Breast epithelium (tissue), 4 donors: ENCODE measurements at regions of chr11 and their contacts with region 1.

Region 1: DNA sequence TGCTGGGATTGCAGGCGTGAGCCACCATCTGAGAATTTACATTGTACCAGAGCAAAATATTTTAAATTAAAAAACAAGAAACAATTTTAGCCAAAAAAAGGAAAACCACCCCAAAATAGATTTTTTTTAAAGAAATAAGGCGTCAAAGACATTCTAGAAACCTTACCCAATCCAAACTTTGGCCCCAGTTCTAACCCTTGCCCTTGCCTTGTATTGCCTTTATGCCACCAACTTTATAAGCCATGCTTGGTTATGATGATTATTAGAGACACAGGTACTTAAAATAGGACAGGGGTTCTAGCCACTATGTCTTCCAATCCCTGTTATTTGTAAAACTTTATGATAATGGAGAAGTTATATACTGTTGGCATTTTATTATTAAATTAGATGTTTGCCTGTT is 11.8 kb downstream of the C11orf54 start:
- DNase-seq: no peak
- H3K4me3 ChIP-seq: no peak overlapping the region
- H3K27ac ChIP-seq: no peak overlapping the region
- H3K4me1 ChIP-seq: no peaks in the 10 kb centered on the region
- H3K27me3 ChIP-seq: no peaks in the 10 kb centered on the region
- CTCF ChIP-seq: no peak
- POLR2A ChIP-seq: no peak

Region 2: GRCh38 chr11:93727985-93728791 is 25.1 kb before region 1 on chr11:
- intact Hi-C with region 1: no loop called
- DNase-seq: no peak
- H3K4me3 ChIP-seq: no peak overlapping the region
- H3K27ac ChIP-seq: peak overlapping the region in 1 of 2 donors; percentile 15
- H3K4me1 ChIP-seq: no peaks in the 10 kb centered on the region
- H3K27me3 ChIP-seq: no peaks in the 10 kb centered on the region
- CTCF ChIP-seq: no peak
- POLR2A ChIP-seq: no peak

Region 3: DNA sequence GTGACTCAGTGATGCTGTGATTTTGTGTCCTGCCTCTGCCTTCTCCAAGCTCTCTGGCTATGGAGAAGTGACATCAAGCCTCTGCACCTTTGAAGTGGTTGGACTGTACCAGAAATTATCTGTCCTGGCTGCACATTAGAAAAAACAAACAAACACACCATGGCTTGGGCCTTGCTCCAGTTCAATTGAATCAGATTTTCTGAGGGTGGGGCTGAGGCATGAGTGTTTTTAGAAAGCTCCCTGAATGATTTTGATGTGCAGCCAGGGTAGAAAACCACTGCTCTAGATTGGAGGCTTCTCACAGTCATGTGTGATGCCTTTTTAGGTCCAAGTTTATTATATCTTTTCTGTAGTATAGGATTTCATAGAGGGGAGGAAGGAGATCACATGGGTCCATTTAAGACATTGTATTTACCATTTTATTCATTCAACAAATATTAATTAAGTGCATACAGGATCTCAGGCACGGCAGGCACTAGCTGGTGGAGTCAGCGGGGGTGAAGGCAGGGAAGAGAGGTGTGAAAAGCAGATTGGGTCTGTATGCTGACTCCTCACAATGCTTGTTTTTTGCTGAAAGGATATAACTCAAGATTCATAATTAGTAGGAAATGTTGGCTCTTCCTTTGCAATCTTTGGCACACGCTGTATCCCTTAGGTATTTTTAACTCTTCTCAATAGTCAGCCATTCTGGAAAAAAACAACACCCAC is 104.3 kb after region 1 on chr11:
- intact Hi-C with region 1: loop called (anchors 5 kb)
- DNase-seq: no peak
- H3K4me3 ChIP-seq: no peak overlapping the region
- H3K27ac ChIP-seq: no peak overlapping the region
- H3K4me1 ChIP-seq: peaks cover 0 to 3% of the 10 kb centered on the region in 2 donors
- H3K27me3 ChIP-seq: no peaks in the 10 kb centered on the region
- CTCF ChIP-seq: no peak
- POLR2A ChIP-seq: no peak

Region 4: GRCh38 chr11:94417386-94417987 is 664.2 kb after region 1 on chr11:
- intact Hi-C with region 1: loop called (anchors 5 kb)
- DNase-seq: no peak
- H3K4me3 ChIP-seq: no peak overlapping the region
- H3K27ac ChIP-seq: no peak overlapping the region
- H3K4me1 ChIP-seq: no peaks in the 10 kb centered on the region
- H3K27me3 ChIP-seq: no peaks in the 10 kb centered on the region
- CTCF ChIP-seq: peak in 2 of 3 donors; percentile 28 to 43
- POLR2A ChIP-seq: no peak